ENCODE measurements at regions of chr1 and their contacts with region 1.

Region 1: DNA sequence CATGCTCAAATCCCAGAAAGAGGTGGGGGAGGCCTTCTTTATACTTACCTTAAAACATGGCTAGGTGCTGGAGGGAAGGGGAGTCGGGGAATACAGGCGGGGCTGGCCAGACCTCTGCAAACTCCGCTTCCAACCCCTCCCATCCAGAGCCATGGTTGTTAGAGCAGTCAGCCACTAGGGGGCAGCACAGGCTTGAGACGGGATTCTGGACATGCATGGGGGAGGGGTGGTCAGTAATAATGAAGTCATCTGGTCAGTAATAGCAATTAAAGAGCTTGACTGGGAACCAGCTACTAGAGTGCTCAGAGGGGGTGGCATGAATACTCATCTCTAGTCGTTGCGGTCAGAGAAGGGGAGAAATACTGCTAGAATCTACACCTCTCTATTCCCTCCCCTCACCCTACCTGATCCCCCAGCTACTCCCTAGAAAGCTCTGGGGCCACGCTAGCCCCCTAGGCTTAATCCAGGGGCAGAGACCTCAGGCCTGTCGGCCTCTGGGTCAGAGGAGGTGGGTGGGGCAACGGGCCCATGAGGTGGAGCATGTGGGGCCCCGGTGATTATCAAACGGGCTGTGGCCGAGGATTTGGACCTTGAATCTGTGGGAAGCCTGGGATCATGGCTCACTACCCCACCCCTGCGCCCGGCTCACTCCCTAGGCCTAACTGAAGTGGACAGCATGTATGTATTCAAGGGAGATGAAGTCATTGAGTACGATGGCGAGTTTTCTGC is 2.9 kb downstream of the CASQ1 start:
- DNase-seq: peak; percentile 96
- ATAC-seq: peak; percentile 88
- H3K4me3 ChIP-seq: no peak overlapping the region
- H3K27ac ChIP-seq: no peak overlapping the region
- H3K4me1 ChIP-seq: peaks cover 9% of the 10 kb centered on the region; the same call in 1 of the 2 replicates
- H3K27me3 ChIP-seq: no peaks in the 10 kb centered on the region
- CTCF ChIP-seq: peak; percentile 98

Region 2: DNA sequence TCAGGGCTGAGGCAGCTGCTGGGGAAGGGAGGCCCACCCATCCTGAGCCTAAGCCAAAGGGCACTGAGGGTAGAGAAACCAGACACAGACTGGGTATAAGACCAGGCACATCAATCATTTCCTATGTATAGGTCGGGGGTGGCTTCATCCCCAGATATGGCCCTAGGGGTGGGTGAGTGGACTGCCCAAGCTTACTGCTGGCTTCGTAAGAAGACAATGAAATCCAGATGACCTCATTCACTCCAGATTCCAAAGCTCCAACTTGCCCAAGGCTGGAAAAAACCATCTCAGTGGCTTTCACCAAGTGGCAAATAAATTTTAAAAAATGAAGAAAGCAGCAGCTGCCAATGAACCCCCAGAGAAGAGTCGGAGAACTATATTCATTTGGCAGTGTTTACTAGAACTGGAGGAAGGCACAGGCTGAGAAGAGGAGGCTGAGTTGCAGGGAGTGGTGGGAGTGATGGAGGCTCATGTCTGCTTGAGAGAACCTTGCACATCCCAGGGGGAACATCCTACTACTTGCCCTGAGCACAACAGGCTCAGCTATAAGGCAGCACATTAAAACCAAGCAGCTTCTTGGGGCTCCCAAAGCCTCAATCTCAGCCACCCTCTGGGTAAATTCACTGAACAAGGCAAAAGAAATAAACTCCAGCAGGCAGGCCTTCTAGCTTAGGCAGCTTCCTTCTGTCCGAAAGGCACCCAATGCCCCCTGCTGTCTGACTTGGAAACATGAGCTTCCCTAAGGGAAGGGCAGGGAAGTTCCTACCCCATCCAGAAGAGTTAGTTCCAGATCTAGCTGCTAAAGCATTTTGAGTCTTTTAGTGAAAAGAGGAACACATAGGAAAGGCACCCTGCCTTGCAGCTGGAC is 26.0 kb after region 1 on chr1:
- CTCF ChIA-PET with region 1: interaction called, 99 read pairs
- POLR2A ChIA-PET with region 1: no interaction called
- intact Hi-C with region 1: loop called (anchors 1 kb)
- DNase-seq: peak; percentile 73
- ATAC-seq: peak; percentile 85
- H3K4me3 ChIP-seq: no peak overlapping the region
- H3K27ac ChIP-seq: no peak overlapping the region
- H3K4me1 ChIP-seq: no peaks in the 10 kb centered on the region
- H3K27me3 ChIP-seq: no peaks in the 10 kb centered on the region
- CTCF ChIP-seq: peak; percentile 83

Region 3: DNA sequence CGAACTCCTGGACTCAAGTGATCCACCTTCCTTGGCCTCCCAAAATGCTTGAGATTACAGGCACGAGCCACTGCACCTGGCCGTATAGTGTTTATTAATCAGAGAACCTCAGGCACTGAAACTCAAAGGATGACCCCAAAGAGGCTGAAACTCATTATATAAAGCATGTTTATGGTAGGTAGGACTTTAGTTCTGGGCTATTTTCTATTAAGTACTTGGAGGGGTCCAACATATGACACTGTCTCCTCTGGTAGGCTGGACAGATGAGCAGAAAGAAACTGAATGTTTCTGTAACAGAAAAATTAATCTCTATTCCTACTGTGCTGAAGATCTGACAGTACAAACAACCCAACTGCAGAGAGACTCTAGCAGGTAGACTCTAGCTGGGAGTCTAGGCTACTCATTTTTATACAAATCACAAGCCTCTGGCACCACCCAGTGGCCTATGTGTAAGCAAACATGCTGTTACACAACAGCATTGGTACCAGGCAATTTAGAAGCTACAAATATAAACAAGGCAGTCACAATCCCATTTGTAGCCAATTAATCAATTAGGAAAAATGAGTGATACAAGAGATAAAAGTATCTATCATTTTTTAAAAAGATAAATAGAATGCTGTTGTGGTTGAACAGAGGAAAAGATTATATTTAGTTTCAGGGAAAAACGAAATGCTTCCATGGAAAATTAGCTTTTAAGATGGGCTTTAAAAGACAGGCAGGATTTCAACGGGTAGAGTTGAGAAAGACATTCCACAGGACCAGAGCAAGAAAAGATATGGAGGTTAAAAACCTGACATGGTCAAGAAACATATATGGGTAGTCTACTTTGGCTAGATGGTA is 58.7 kb after region 1 on chr1:
- CTCF ChIA-PET with region 1: interaction called, 53 read pairs
- POLR2A ChIA-PET with region 1: no interaction called
- intact Hi-C with region 1: loop called (anchors 1 kb)
- DNase-seq: peak; percentile 86
- ATAC-seq: peak; percentile 99
- H3K4me3 ChIP-seq: no peak overlapping the region
- H3K27ac ChIP-seq: no peak overlapping the region
- H3K4me1 ChIP-seq: peaks cover 6% of the 10 kb centered on the region
- H3K27me3 ChIP-seq: no peaks in the 10 kb centered on the region
- CTCF ChIP-seq: peak; percentile 96

Region 4: GRCh38 chr1:160291248-160292220 is 98.3 kb after region 1 on chr1:
- CTCF ChIA-PET with region 1: interaction called, 35 read pairs
- POLR2A ChIA-PET with region 1: no interaction called
- intact Hi-C with region 1: loop called (anchors 1 kb)
- DNase-seq: peak; percentile 80
- ATAC-seq: peak; percentile 87
- H3K4me3 ChIP-seq: no peak overlapping the region
- H3K27ac ChIP-seq: no peak overlapping the region
- H3K4me1 ChIP-seq: peaks cover 4% of the 10 kb centered on the region; the same call in 1 of the 2 replicates
- H3K27me3 ChIP-seq: no peaks in the 10 kb centered on the region
- CTCF ChIP-seq: peak; percentile 92

Measured in PC-3 (cell line).